Activated CD8-positive, alpha-beta memory T cell treated with anti-CD3 and anti-CD28 coated beads, Interleukin-2, amount 10 ng/mL, durations not matched to agents 7 days and 5 days (primary cell): ENCODE measurements at regions of chr22 and their contacts with region 1.

Region 1: GRCh38 chr22:22235558-22235957 is 9.0 kb upstream of the VPREB1 start:
- DNase-seq: peak; percentile 72
- ATAC-seq: peak; percentile 45
- H3K4me3 Mint-ChIP-seq: no peak overlapping the region
- H3K27ac Mint-ChIP-seq: no peak overlapping the region
- H3K4me1 Mint-ChIP-seq: peaks cover 18% of the 10 kb centered on the region
- H3K27me3 Mint-ChIP-seq: peaks cover 2% of the 10 kb centered on the region

Region 2: DNA sequence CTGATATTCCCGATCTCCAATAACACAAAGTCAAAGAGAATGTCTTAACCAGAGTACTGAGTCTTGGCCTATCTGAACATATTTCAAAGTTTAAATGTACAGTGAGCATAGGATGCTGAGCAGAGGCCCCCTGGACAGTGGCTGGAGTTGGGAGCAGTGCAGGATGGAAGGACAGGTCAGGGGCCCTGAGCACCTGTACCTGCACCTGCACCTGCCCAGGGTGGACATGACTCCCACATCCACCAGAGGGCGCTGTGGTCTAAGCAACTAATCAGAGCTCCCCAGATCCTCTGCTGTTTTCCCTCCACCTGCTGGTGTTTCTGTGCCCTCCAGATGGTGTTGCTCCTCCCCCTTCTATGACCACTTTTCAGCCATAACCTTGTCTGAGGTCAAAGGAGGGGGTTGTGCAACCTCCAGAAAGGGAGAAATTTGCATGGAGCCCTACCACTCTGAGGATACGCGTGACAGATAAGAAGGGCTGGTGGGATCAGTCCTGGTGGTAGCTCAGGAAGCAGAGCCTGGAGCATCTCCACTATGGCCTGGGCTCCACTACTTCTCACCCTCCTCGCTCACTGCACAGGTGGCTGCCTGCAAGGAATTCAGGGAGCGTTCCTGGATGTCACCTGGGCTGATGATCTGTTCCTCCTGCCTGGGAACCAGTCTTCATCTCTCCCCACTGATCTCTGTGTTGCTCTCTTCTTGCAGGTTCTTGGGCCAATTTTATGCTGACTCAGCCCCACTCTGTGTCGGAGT is 40.1 kb before region 1 on chr22:
- CTCF ChIA-PET with region 1: interaction called, 212 read pairs
- DNase-seq: peak; percentile 86
- ATAC-seq: peak; percentile 93
- H3K4me3 Mint-ChIP-seq: no peak overlapping the region
- H3K27ac Mint-ChIP-seq: no peak overlapping the region
- H3K4me1 Mint-ChIP-seq: peaks cover 14% of the 10 kb centered on the region
- H3K27me3 Mint-ChIP-seq: peaks cover 29% of the 10 kb centered on the region

Region 3: GRCh38 chr22:22207845-22208564 is 27.6 kb before region 1 on chr22:
- CTCF ChIA-PET with region 1: interaction called, 212 read pairs
- DNase-seq: peak; percentile 91
- ATAC-seq: peak; percentile 78
- H3K4me3 Mint-ChIP-seq: peak overlapping the region; percentile 19
- H3K27ac Mint-ChIP-seq: peak overlapping the region; percentile 83
- H3K4me1 Mint-ChIP-seq: peaks cover 43% of the 10 kb centered on the region
- H3K27me3 Mint-ChIP-seq: peaks cover 2% of the 10 kb centered on the region

Region 4: DNA sequence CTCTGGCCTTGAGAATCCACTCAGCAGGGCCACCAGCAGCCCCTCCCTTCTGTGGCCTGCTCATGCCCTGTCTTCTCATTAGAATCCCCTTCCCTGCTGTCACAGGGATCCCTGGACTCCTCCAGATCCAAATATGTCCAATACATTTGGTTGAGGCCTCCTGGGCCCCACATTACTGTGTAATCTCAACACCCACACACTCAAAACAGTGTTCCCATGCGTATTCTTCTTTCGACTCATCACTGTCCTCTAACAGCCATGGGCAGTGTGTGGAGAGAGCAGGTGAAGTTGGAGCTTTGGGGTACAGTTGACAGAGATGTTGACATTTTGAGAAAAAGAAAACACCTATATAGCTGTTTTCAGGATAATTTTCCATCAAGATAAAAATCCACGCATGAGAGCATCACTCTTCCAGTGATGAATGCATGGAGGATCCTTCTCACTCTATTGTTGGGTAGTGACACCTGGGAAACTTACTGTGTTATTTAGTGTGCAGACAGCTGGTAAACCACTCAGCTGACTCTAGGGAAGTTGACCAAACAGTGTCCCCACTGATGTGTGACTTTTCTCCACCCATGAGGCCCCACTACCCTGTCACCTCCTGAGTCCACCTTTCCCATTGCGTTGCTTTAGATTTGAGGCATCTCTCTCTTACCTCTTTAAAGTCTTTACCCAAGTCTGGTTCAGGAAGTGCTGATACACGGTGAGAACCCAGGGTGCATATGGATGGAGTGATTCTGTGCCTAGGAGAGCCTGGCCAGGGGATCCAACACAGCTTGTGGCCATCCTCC is 19.7 kb before region 1 on chr22:
- CTCF ChIA-PET with region 1: interaction called, 212 read pairs
- DNase-seq: no peak
- ATAC-seq: no peak
- H3K4me3 Mint-ChIP-seq: no peak overlapping the region
- H3K27ac Mint-ChIP-seq: no peak overlapping the region
- H3K4me1 Mint-ChIP-seq: peaks cover 19% of the 10 kb centered on the region
- H3K27me3 Mint-ChIP-seq: no peaks in the 10 kb centered on the region

Region 5: GRCh38 chr22:22785316-22786065 is 549.9 kb after region 1 on chr22:
- CTCF ChIA-PET with region 1: no interaction called
- DNase-seq: no peak
- ATAC-seq: no peak
- H3K4me3 Mint-ChIP-seq: no peak overlapping the region
- H3K27ac Mint-ChIP-seq: no peak overlapping the region
- H3K4me1 Mint-ChIP-seq: peaks cover 22% of the 10 kb centered on the region
- H3K27me3 Mint-ChIP-seq: peaks cover 6% of the 10 kb centered on the region